Activated CD8-positive, alpha-beta T cell treated with anti-CD3 and anti-CD28 coated beads, Interleukin-2, amount 10 ng/mL, durations not matched to agents 7 days and 5 days (primary cell): ENCODE measurements at regions of chr3 and their contacts with region 1.

Region 1: DNA sequence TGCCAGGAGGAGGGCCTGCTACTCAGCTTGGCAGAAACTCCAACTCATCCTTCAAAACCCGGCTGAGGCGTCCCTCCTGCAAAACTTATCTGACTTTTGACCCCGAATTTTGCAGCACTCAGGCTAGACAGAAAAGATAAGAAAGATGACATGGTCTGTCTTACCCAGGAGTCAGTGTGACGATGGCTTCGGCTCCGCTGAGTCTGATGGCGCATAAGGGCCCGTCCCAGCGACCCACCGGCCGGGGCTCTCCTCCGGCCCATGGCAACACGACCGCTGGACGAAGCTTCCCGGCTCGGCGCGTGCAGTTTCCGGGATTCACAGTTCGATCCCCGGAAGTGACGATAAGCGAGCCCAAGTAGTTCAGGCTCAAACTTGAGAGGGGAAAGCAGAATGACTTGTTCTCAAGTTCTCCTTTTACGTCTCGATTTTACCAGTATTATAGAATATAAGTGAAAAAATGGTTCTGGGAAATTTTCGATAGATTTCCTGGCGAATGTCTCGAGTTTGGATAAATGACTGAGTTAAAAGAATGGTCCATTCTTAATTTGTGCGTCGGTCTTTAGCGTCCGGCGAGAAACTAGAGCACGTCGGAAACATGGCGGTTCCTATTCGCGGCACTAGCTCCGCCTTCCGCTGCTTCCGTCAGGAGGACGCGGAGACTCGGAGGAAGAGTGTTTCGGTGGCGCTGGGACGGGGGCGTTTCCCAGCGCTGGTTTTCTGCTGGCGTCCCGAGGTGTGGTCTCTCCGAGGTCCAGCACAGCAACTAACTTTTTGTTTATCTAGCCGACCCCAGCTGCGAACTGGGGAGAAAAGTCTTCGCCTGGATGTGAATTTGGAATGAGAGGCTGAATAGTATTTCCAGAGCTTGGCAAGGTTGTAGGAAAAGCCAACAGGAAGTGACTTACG is at the start of gene LSG1:
- DNase-seq: peak; percentile 94
- ATAC-seq: peak; percentile 93
- H3K4me3 Mint-ChIP-seq: peak within 1 kb of the TSS; percentile 97
- H3K27ac Mint-ChIP-seq: peak within 1 kb of the TSS; percentile 97
- H3K4me1 Mint-ChIP-seq: peaks cover 27% of the 10 kb centered on the region
- H3K27me3 Mint-ChIP-seq: no peaks in the 10 kb centered on the region
- total RNA-seq, gene LSG1: 46.9 to 48.0 TPM

Region 2: DNA sequence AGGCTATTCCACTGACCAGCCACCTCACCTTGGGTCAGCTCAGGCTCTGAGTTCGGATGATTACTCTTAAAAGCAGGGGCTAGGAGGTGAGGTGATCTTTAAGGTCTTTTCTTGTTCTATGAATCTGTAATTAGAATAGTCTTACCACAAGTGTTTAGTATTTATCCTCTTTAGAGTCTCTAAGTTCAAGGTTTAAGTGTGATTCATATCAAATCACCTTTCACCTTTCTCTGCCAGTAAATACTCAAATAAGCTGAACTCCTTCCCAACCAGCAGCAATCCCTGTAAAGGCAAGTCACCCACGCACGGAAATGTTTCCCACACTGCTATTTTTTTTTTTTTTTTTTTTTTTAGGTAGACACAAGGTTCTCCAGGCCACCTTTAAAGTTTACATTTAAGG is 24.4 kb before region 1 on chr3:
- CTCF ChIA-PET with region 1: interaction called, 12 read pairs
- POLR2A ChIA-PET with region 1: no interaction called
- DNase-seq: no peak
- ATAC-seq: no peak
- H3K4me3 Mint-ChIP-seq: no peak overlapping the region
- H3K27ac Mint-ChIP-seq: no peak overlapping the region
- H3K4me1 Mint-ChIP-seq: no peaks in the 10 kb centered on the region
- H3K27me3 Mint-ChIP-seq: no peaks in the 10 kb centered on the region

Region 3: DNA sequence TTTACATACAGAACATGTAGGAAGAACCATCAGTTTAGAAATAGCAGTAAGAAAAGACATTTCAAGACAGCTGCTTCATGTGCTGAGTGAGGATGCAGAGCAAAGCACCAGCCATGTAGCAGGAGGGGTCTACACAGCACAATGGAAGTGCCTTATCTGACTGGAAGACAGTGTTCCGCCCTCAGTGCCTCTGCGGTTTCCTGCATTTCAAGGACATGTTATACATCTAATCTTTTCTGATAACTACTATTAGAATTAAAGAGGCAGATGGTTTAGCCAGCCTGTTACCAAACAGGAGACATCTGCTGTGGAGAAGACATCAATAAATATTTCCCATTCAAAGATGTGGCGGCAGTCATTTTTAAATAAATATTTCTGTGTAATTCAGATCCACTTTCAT is 10.8 kb before region 1 on chr3:
- CTCF ChIA-PET with region 1: interaction called, 59 read pairs
- POLR2A ChIA-PET with region 1: interaction called, 6 read pairs
- DNase-seq: no peak
- ATAC-seq: peak; percentile 53
- H3K4me3 Mint-ChIP-seq: no peak overlapping the region
- H3K27ac Mint-ChIP-seq: no peak overlapping the region
- H3K4me1 Mint-ChIP-seq: peaks cover 17% of the 10 kb centered on the region
- H3K27me3 Mint-ChIP-seq: no peaks in the 10 kb centered on the region

Region 4: GRCh38 chr3:195106418-195106906 is 434.3 kb after region 1 on chr3:
- CTCF ChIA-PET with region 1: interaction called, 21 read pairs
- POLR2A ChIA-PET with region 1: no interaction called
- DNase-seq: peak; percentile 73
- ATAC-seq: peak; percentile 84
- H3K4me3 Mint-ChIP-seq: peak overlapping the region; percentile 5
- H3K27ac Mint-ChIP-seq: no peak overlapping the region
- H3K4me1 Mint-ChIP-seq: peaks cover 14% of the 10 kb centered on the region
- H3K27me3 Mint-ChIP-seq: no peaks in the 10 kb centered on the region

Region 5: GRCh38 chr3:195259475-195260279 is 587.5 kb after region 1 on chr3:
- CTCF ChIA-PET with region 1: interaction called, 43 read pairs
- POLR2A ChIA-PET with region 1: interaction called, 8 read pairs
- DNase-seq: peak; percentile 94
- ATAC-seq: peak; percentile 80
- H3K4me3 Mint-ChIP-seq: peak overlapping the region; percentile 48
- H3K27ac Mint-ChIP-seq: no peak overlapping the region
- H3K4me1 Mint-ChIP-seq: peaks cover 38% of the 10 kb centered on the region
- H3K27me3 Mint-ChIP-seq: no peaks in the 10 kb centered on the region